ENCODE measurements at regions of chr5 and their contacts with region 1.

Region 1: DNA sequence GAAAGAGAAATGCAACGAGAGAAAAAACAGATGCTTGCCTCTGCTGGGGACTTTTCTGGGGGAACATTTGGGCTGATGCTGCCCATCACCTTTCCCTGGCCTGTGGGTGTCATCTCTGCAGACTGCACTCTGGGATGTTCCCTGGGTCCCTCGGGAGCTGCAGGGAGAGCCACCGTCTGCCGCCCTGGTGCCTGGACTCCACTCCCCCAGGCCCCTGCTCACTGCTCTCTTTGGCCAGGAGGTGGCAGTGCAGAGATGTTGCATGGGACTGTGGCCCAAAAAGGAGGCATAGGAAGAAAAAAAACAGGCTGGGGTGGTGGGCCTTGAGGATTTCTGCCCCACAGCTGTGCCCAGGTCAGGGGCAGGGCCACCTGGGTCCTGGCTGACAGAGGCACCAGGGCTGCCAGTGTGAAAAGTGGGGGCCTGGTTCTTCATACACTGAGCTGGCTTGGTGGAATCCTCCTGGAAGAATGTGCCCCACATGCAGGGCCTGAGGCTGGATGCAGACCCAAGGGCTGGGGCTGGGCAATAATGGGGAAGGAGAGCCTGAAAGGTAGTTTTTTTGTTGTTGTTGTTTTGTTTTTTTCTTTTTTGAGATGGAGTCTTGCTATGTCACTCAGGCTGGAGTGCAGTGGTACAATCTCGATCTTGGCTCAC is 353.6 kb downstream of the SLIT3 start:
- DNase-seq: peak; percentile 78
- H3K4me3 ChIP-seq: peak overlapping the region in 1 of 2 experiments; percentile 44; a peak in 1 of 4 replicates
- H3K27ac ChIP-seq: peak overlapping the region in 1 of 2 experiments; percentile 98; a peak in 2 of 4 replicates
- H3K4me1 ChIP-seq: peaks cover 0 to 69% of the 10 kb centered on the region in 2 experiments; a peak in 2 of 4 replicates
- H3K27me3 ChIP-seq: no peaks in the 10 kb centered on the region
- CTCF ChIP-seq: peak; percentile 87
- EP300 ChIP-seq: 0 out of 4 replicates have a peak, but pooled peaks of 1 of the 2 experiments have one; percentile 32
- RAD21 ChIP-seq: peak; percentile 88

Region 2: GRCh38 chr5:168268949-168269943 is 678.1 kb before region 1 on chr5:
- CTCF ChIA-PET with region 1: interaction called, 16 read pairs
- POLR2A ChIA-PET with region 1: no interaction called
- DNase-seq: peak; percentile 91
- H3K4me3 ChIP-seq: peak overlapping the region; percentile 43 to 65
- H3K27ac ChIP-seq: peak overlapping the region; percentile 36 to 48
- H3K4me1 ChIP-seq: peaks cover 8 to 28% of the 10 kb centered on the region in 2 experiments; a peak in 3 of 4 replicates
- H3K27me3 ChIP-seq: no peaks in the 10 kb centered on the region
- CTCF ChIP-seq: peak; percentile 92
- EP300 ChIP-seq: no peak
- RAD21 ChIP-seq: peak; percentile 96

Region 3: DNA sequence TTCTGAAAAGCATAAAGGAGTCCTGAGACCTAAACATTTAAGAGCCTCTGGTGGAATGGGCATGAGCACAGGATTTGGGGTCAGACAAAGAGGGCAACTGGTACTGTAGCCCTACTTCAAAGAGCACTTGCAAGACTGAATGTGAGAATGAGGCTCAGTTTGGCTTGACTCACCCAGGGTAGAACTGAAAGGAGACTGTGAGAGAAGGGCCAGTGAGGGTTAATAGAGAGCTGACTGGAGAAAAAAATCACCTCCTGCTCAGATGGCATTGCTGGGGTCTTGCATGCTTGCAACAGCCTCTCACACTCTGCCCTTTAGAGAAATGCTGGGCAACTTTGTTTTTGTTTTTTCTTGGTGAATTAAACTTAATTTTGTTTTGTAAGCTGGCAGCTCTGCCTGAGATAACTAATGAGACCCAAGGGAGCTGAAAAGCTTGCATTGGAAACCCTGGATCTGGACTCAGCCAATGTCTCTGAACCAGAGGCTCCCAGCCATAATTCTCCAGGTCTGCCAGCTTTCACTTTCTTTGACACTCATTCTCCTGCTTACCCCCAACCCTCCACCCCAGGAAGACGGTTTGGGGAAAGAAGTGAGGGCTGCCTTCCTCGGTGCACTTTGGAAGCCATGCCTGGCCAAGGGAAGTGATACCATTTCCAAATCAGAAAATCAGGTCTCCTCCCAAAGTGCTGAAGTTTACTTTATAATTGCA is 207.1 kb before region 1 on chr5:
- CTCF ChIA-PET with region 1: interaction called, 11 read pairs
- POLR2A ChIA-PET with region 1: no interaction called
- DNase-seq: no peak
- H3K4me3 ChIP-seq: no peak overlapping the region
- H3K27ac ChIP-seq: no peak overlapping the region; a peak in 1 of 4 replicates
- H3K4me1 ChIP-seq: peaks cover 0 to 13% of the 10 kb centered on the region in 2 experiments; a peak in 1 of 4 replicates
- H3K27me3 ChIP-seq: no peaks in the 10 kb centered on the region
- CTCF ChIP-seq: no peak
- EP300 ChIP-seq: no peak
- RAD21 ChIP-seq: no peak

Region 4: DNA sequence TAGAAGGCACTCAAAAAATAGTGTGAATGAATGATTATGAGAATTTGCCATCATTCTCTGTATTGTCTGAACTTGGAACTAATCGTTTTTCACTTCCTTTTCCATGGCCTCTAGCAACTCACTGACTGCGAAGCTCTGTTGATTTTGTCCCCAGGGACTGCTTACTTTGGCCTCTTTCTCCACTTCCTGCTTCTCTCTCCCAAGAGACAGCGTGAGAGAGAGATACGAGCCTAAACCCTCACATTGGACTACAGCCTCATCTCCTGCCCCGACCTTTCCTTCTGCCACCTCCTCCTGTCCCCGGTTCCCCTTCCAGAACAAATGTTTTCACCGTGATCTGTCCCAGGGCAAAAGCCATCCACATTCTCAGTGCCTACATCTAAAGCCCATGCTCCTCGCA is 67.4 kb before region 1 on chr5:
- CTCF ChIA-PET with region 1: interaction called, 47 read pairs
- POLR2A ChIA-PET with region 1: interaction called, 99 read pairs
- DNase-seq: no peak
- H3K4me3 ChIP-seq: peak overlapping the region in 1 of 2 experiments; percentile 45; a peak in 2 of 4 replicates
- H3K27ac ChIP-seq: peak overlapping the region; percentile 58 to 100; a peak in 3 of 4 replicates
- H3K4me1 ChIP-seq: peaks cover 12 to 68% of the 10 kb centered on the region in 2 experiments; a peak in 3 of 4 replicates
- H3K27me3 ChIP-seq: no peaks in the 10 kb centered on the region
- CTCF ChIP-seq: no peak
- EP300 ChIP-seq: no peak
- RAD21 ChIP-seq: no peak

Region 5: DNA sequence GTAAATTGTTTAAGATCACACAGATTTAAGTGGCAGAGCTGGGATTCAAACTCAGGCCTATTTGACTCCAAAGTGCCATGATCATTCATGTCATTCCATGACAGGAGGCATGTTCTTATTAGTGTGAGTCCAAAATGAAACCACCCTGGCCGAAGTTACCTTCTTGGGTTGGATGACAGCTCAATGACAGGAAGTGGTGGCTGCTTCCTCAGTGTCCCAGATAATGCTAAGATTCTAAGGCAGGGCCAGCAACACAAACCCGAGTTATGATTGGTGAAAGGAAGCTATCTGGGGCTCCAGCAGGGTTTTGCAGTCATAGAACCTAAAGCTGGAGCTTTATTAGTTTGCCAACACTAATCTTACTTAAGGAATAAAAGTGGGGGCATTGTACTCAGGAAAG is 13.2 kb after region 1 on chr5:
- CTCF ChIA-PET with region 1: interaction called, 10 read pairs
- POLR2A ChIA-PET with region 1: no interaction called
- DNase-seq: no peak
- H3K4me3 ChIP-seq: no peak overlapping the region
- H3K27ac ChIP-seq: no peak overlapping the region
- H3K4me1 ChIP-seq: peaks cover 0 to 11% of the 10 kb centered on the region in 2 experiments; a peak in 1 of 4 replicates
- H3K27me3 ChIP-seq: no peaks in the 10 kb centered on the region
- CTCF ChIP-seq: no peak
- EP300 ChIP-seq: no peak
- RAD21 ChIP-seq: no peak

Region 6: GRCh38 chr5:168987543-168988300 is 40.4 kb after region 1 on chr5:
- CTCF ChIA-PET with region 1: interaction called, 15 read pairs
- POLR2A ChIA-PET with region 1: interaction called, 3 read pairs
- DNase-seq: peak; percentile 63
- H3K4me3 ChIP-seq: no peak overlapping the region
- H3K27ac ChIP-seq: peak overlapping the region in 1 of 2 experiments; percentile 25; a peak in 1 of 4 replicates
- H3K4me1 ChIP-seq: peaks cover 0 to 57% of the 10 kb centered on the region in 2 experiments; a peak in 2 of 4 replicates
- H3K27me3 ChIP-seq: no peaks in the 10 kb centered on the region
- CTCF ChIP-seq: peak; percentile 94
- EP300 ChIP-seq: peak in 1 of 2 experiments; percentile 11; a peak in 1 of 4 replicates
- RAD21 ChIP-seq: peak; percentile 97

Region 7: GRCh38 chr5:169104937-169105494 is 157.7 kb after region 1 on chr5:
- CTCF ChIA-PET with region 1: no interaction called
- POLR2A ChIA-PET with region 1: no interaction called
- DNase-seq: no peak
- H3K4me3 ChIP-seq: no peak overlapping the region
- H3K27ac ChIP-seq: no peak overlapping the region
- H3K4me1 ChIP-seq: peaks cover 0 to 48% of the 10 kb centered on the region in 2 experiments; a peak in 2 of 4 replicates
- H3K27me3 ChIP-seq: no peaks in the 10 kb centered on the region
- CTCF ChIP-seq: no peak
- EP300 ChIP-seq: no peak
- RAD21 ChIP-seq: no peak

Region 8: DNA sequence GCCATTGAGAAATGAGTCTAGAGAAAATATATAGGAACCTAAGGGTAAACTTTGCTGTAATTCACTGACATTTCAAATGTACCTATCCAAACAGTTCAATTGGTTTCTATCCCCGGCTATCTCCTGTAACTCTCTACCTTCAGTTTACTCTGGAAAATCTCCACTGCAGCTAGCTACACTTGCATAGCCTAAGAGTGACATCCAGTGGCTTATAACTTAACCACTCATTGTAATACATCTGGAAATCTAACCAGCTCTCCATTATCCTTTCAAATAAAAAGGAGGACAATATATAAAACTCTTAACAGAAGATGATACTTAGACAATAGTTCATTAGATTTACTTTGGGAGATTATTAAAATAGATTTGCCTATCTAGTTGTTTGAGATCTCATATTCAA is 601.0 kb after region 1 on chr5:
- CTCF ChIA-PET with region 1: interaction called, 55 read pairs
- POLR2A ChIA-PET with region 1: no interaction called
- DNase-seq: peak; percentile 35
- H3K4me3 ChIP-seq: no peak overlapping the region
- H3K27ac ChIP-seq: peak overlapping the region in 1 of 2 experiments; percentile 81; a peak in 2 of 4 replicates
- H3K4me1 ChIP-seq: peaks cover 0 to 23% of the 10 kb centered on the region in 2 experiments; a peak in 2 of 4 replicates
- H3K27me3 ChIP-seq: no peaks in the 10 kb centered on the region
- CTCF ChIP-seq: peak; percentile 76
- EP300 ChIP-seq: 0 out of 4 replicates have a peak, but pooled peaks of 1 of the 2 experiments have one; percentile 20
- RAD21 ChIP-seq: peak; percentile 99

Measured in SK-N-SH (cell line).